ENCODE measurements at regions of chr5 and their contacts with region 1.

Region 1: GRCh38 chr5:134370871-134371833 is at the start of gene UBE2B:
- DNase-seq: peak; percentile 100
- H3K4me3 Mint-ChIP-seq: peak within 1 kb of the TSS; percentile 99
- H3K27ac Mint-ChIP-seq: peak within 1 kb of the TSS; percentile 99
- H3K4me1 Mint-ChIP-seq: peaks cover 28% of the 10 kb centered on the region
- H3K27me3 Mint-ChIP-seq: no peaks in the 10 kb centered on the region
- CTCF ChIP-seq: no peak
- total RNA-seq, gene UBE2B: 178 and 186 TPM in 2 replicates

Region 2: GRCh38 chr5:133881576-133882388 is 489.4 kb before region 1 on chr5:
- CTCF ChIA-PET with region 1: no interaction called
- POLR2A ChIA-PET with region 1: no interaction called
- intact Hi-C with region 1: no loop called
- DNase-seq: no peak
- H3K4me3 Mint-ChIP-seq: no peak overlapping the region
- H3K27ac Mint-ChIP-seq: no peak overlapping the region
- H3K4me1 Mint-ChIP-seq: no peaks in the 10 kb centered on the region
- H3K27me3 Mint-ChIP-seq: peaks cover 42% of the 10 kb centered on the region
- CTCF ChIP-seq: no peak

Region 3: GRCh38 chr5:134304311-134304710 is 66.8 kb before region 1 on chr5:
- CTCF ChIA-PET with region 1: interaction called, 4 read pairs
- POLR2A ChIA-PET with region 1: interaction called, 14 read pairs
- intact Hi-C with region 1: no loop called
- DNase-seq: no peak
- H3K4me3 Mint-ChIP-seq: no peak overlapping the region
- H3K27ac Mint-ChIP-seq: no peak overlapping the region
- H3K4me1 Mint-ChIP-seq: no peaks in the 10 kb centered on the region
- H3K27me3 Mint-ChIP-seq: no peaks in the 10 kb centered on the region
- CTCF ChIP-seq: no peak

Region 4: DNA sequence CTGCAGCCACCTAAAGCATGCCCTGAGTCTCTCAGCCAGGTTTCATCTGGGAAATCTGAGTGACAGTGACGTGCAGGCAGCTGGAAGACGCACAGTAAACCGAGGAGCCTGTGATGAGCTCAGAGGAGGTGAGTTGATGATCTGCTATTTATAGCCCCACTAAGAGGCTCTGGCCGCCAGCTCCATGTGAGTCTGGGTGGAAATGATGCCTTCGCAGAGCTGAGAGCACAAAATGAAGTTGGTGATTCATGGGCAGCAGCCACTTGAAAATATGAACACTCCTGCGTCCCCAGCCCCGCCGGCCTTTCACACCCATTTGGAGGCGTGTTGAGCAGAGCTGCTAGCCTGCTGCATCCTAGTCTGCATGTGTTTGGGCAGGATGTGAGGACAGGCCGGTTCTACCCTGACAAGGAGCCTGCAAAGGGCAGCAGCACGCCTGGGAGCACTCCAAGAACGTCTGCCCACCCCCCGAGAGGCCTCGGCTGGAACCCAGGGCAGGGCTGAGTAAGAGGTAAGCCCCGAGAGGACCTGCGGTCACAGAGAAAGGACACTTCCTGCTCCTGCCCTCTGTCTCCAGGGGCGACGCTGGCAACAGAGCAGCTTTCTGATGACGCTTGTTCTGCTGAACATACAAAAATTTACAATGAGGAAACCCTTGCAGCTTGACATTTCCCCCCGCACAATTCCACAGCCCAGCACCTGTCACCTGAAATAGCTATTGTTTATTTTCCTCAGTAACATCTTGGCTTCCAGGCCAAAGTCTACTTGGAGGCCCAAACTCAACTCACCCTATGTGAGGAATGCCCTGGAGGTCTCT is 65.6 kb after region 1 on chr5:
- CTCF ChIA-PET with region 1: interaction called, 4 read pairs
- POLR2A ChIA-PET with region 1: interaction called, 92 read pairs
- intact Hi-C with region 1: loop called (anchors 2 kb)
- DNase-seq: peak; percentile 96
- H3K4me3 Mint-ChIP-seq: peak overlapping the region; percentile 63
- H3K27ac Mint-ChIP-seq: peak overlapping the region; percentile 98
- H3K4me1 Mint-ChIP-seq: peaks cover 72% of the 10 kb centered on the region
- H3K27me3 Mint-ChIP-seq: no peaks in the 10 kb centered on the region
- CTCF ChIP-seq: no peak

Region 5: DNA sequence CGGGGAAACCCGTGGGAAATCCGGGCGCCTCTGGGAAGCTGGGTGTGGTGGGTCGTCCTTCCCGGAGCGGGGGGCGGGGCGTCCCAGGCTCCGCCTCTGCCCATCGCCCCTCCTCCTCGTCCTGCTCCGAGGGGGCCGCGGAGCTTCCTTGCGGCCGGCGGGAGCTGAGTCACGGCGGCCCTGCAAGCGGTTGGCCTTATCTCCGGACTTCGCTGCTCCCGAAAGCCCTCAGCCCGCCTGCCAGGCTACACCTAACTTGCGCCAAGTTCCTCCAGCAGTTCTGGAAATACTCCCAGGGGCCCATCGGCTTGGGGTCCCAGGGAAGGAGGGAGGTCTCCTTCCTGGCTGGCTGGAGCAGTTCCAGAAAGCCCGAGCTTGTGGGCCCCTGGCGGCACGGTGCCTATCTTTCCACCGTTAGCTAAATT is 94.7 kb after region 1 on chr5:
- CTCF ChIA-PET with region 1: interaction called, 7 read pairs
- POLR2A ChIA-PET with region 1: interaction called, 67 read pairs
- intact Hi-C with region 1: loop called (anchors 1 kb)
- DNase-seq: peak; percentile 97
- H3K4me3 Mint-ChIP-seq: peak overlapping the region; percentile 72
- H3K27ac Mint-ChIP-seq: peak overlapping the region; percentile 44
- H3K4me1 Mint-ChIP-seq: peaks cover 42% of the 10 kb centered on the region
- H3K27me3 Mint-ChIP-seq: no peaks in the 10 kb centered on the region
- CTCF ChIP-seq: no peak

Region 6: DNA sequence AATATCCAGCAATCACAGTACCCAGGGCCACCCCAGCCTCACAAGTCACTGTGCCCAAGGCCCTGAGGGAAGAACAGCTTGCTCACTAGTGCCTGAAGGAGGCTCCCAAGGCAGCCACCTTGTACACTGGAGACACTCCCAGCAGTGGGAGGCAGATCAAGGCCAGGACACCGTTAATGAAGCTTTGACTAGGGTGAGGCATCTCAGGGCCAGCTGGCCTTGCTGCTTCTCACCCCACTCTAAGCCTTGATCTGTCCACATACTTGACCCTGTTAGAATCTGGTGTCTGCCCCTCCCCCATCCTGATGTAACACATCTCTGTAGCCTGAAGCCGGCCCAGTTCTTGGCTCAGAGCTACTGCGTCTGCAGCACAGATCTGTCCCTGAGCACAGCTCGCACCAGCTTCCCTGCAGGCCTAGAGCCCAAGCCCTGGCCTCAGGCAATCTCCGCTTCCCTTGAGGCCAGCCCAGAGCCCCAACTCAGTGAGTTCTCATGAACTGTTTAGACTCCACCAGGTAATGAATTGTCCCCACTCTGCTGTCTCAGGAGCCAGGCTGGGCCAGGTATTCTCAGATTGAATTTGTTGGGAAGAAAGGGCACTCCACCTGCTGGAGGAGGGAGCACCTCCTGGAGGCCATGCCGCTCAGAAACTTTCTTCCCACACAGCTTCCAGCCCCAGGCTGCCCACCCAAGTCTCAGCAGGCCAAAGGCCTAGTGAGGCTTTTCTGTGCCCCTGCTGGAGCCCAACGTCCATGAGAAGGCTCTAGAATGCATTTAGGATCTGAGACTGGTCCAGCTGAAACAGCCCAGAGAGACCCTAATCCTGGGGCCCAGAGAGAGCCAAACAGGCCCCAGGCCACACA is 140.9 kb after region 1 on chr5:
- CTCF ChIA-PET with region 1: interaction called, 22 read pairs
- POLR2A ChIA-PET with region 1: interaction called, 72 read pairs
- intact Hi-C with region 1: loop called (anchors 5 kb)
- DNase-seq: peak; percentile 95
- H3K4me3 Mint-ChIP-seq: peak overlapping the region; percentile 48
- H3K27ac Mint-ChIP-seq: peak overlapping the region; percentile 82
- H3K4me1 Mint-ChIP-seq: peaks cover 54% of the 10 kb centered on the region
- H3K27me3 Mint-ChIP-seq: no peaks in the 10 kb centered on the region
- CTCF ChIP-seq: peak; percentile 61

Region 7: DNA sequence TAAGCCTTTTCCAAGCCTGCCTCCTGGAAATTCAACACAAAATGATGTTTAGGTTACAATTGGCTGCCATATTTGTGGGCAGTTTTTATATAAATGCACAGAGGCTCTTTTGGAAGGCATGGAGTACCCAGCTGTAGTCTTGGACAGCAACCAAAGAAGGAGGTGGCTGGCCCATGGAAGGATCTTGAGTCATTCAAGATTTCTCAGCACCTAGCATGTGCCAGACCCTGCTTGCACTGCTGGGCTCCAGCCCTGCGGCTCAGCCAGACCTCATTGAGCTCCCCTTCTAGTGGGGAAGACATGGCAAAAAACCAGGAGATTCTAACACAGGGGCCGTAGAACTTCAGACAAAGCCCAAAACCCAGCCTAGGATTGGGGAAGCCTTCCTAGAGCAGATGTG is 176.4 kb after region 1 on chr5:
- CTCF ChIA-PET with region 1: no interaction called
- POLR2A ChIA-PET with region 1: interaction called, 12 read pairs
- intact Hi-C with region 1: no loop called
- DNase-seq: peak; percentile 91
- H3K4me3 Mint-ChIP-seq: no peak overlapping the region
- H3K27ac Mint-ChIP-seq: peak overlapping the region; percentile 57
- H3K4me1 Mint-ChIP-seq: peaks cover 19% of the 10 kb centered on the region
- H3K27me3 Mint-ChIP-seq: no peaks in the 10 kb centered on the region
- CTCF ChIP-seq: no peak

Region 8: DNA sequence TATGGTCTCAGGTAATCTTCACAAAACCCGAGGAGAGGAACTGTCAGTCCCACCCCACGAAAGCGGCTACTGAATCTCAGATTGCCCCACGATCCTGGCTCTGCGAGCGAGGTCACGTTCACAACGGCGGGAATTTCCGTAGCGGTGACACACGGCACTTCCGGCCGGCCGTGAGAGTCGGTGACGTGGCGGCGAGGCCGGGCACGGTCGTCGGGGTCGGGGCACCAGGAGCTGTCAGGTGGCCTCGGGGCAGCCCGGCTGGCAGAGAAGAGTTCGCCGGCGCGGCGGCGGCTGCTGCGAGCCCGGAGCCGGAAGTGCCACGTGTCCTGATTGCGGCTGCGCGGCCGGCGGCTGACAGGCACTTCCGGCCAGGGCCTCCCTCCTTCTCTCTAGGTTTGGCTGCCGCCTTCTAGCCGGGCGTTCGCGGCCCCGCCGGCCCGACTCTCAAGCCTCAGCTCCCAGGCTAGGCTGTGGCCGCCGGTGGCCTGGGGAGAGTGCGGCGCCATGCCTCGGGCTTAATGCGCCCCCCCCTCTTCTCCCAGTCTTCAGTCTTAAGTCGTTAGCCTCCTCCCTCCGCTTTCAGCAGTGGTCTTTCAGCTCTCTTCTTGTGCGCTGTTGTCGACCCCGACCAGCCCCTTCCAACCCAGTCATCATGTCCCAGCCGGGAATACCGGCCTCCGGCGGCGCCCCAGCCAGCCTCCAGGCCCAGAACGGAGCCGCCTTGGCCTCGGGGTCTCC is 277.4 kb after region 1 on chr5 and contains the start of gene SEC24A:
- CTCF ChIA-PET with region 1: no interaction called
- POLR2A ChIA-PET with region 1: interaction called, 17 read pairs
- intact Hi-C with region 1: no loop called
- DNase-seq: peak; percentile 95
- H3K4me3 Mint-ChIP-seq: peak within 1 kb of the TSS; percentile 99
- H3K27ac Mint-ChIP-seq: peak within 1 kb of the TSS; percentile 100
- H3K4me1 Mint-ChIP-seq: peaks cover 5% of the 10 kb centered on the region
- H3K27me3 Mint-ChIP-seq: no peaks in the 10 kb centered on the region
- CTCF ChIP-seq: no peak
- total RNA-seq, gene SEC24A: 39.1 and 41.4 TPM in 2 replicates